Motor neuron (in vitro differentiated cells): ENCODE measurements at regions of chr20 and their contacts with region 1.

Region 1: GRCh38 chr20:5205348-5206210 is 78.8 kb downstream of the CDS2 start:
- ATAC-seq: peak; percentile 81 to 100 (median 97)
- H3K4me3 ChIP-seq: no peak overlapping the region
- H3K27ac ChIP-seq: no peak overlapping the region
- H3K4me1 ChIP-seq: peaks cover 0 to 5% of the 10 kb centered on the region in 2 donors

Region 2: GRCh38 chr20:5448449-5449118 is 243.0 kb after region 1 on chr20:
- in situ Hi-C with region 1: loop called in 4 of 9 experiments (anchors 25 kb)
- ATAC-seq: peak in 4 of 8 experiments; percentile 33 to 73 (median 62)
- H3K4me3 ChIP-seq: no peak overlapping the region
- H3K27ac ChIP-seq: no peak overlapping the region
- H3K4me1 ChIP-seq: no peaks in the 10 kb centered on the region